AG04449 (cell line): ENCODE measurements at regions of chr1 and their contacts with region 1.

Region 1: GRCh38 chr1:113140588-113141446 is 67.8 kb downstream of the LRIG2 start:
- DNase-seq: no peak
- H3K4me3 ChIP-seq: no peak overlapping the region
- CTCF ChIP-seq: peak; percentile 70

Region 2: DNA sequence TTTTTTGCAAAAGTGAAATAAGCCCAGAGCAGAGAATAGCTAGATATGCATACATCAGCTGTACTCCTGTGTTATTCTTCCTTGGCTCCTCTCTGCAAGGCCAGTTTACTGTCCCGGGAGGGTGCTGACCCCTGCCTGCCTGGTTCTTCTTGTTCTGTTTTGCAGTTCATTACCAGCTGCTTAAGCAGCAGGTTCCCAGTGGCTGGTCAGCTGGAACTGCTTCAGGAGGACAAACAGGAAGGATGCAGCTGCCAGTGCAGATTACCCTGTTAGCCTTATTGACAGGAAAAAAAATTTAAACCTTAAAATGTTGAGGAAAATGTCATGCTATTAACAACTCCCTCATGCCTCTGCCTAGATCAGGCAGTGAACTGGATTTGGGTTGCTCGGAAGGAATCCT is 83.8 kb before region 1 on chr1:
- CTCF ChIA-PET with region 1: no interaction called
- POLR2A ChIA-PET with region 1: no interaction called
- DNase-seq: no peak
- H3K4me3 ChIP-seq: no peak overlapping the region
- CTCF ChIP-seq: no peak

Region 3: GRCh38 chr1:113452921-113453770 is 312.3 kb after region 1 on chr1:
- CTCF ChIA-PET with region 1: interaction called, 16 read pairs
- POLR2A ChIA-PET with region 1: no interaction called
- DNase-seq: no peak
- H3K4me3 ChIP-seq: no peak overlapping the region
- CTCF ChIP-seq: peak; percentile 36

Region 4: GRCh38 chr1:113677250-113678158 is 536.7 kb after region 1 on chr1:
- CTCF ChIA-PET with region 1: interaction called, 140 read pairs
- POLR2A ChIA-PET with region 1: no interaction called
- DNase-seq: no peak
- H3K4me3 ChIP-seq: no peak overlapping the region
- CTCF ChIP-seq: peak; percentile 25